Activated B cell treated with CpG ODN at 0.5 μM for 24 hours (primary cell): ENCODE measurements at regions of chr7 and their contacts with region 1.

Region 1: GRCh38 chr7:105429746-105430612 is 41.3 kb upstream of the SRPK2 start:
- DNase-seq: no peak
- ATAC-seq: peak; percentile 54
- H3K4me3 Mint-ChIP-seq: no peak overlapping the region
- H3K27ac Mint-ChIP-seq: no peak overlapping the region
- H3K4me1 Mint-ChIP-seq: peaks cover 3% of the 10 kb centered on the region
- H3K27me3 Mint-ChIP-seq: no peaks in the 10 kb centered on the region
- CTCF ChIP-seq: no peak

Region 2: GRCh38 chr7:105141068-105141467 is 288.9 kb before region 1 on chr7:
- CTCF ChIA-PET with region 1: interaction called, 7 read pairs
- POLR2A ChIA-PET with region 1: no interaction called
- intact Hi-C with region 1: loop called (anchors 1 kb)
- DNase-seq: no peak
- ATAC-seq: no peak
- H3K4me3 Mint-ChIP-seq: no peak overlapping the region
- H3K27ac Mint-ChIP-seq: no peak overlapping the region
- H3K4me1 Mint-ChIP-seq: no peaks in the 10 kb centered on the region
- H3K27me3 Mint-ChIP-seq: no peaks in the 10 kb centered on the region
- CTCF ChIP-seq: no peak

Region 3: DNA sequence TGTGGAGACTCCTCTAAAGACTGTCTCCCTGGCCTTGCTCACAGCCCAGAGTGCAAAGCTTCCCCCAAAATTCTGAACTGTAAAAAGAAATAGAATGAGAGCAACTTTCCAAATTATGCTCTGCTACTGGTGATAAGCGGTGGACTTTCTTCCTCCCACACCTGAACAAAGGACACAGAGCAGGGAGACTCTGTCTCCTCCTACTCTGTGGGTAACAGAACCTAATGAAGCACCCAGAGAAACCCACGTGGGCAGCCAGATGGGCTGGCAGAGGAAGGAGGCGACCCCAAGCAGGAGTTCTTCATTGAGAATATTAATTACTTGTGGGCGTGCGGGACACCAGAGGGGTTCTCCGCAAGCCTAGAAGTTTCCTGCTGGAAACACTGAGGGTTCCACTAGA is 276.4 kb before region 1 on chr7:
- CTCF ChIA-PET with region 1: interaction called, 5 read pairs
- POLR2A ChIA-PET with region 1: no interaction called
- intact Hi-C with region 1: loop called (anchors 1 kb)
- DNase-seq: no peak
- ATAC-seq: no peak
- H3K4me3 Mint-ChIP-seq: no peak overlapping the region
- H3K27ac Mint-ChIP-seq: peak overlapping the region; percentile 1
- H3K4me1 Mint-ChIP-seq: no peaks in the 10 kb centered on the region
- H3K27me3 Mint-ChIP-seq: no peaks in the 10 kb centered on the region
- CTCF ChIP-seq: no peak

Region 4: DNA sequence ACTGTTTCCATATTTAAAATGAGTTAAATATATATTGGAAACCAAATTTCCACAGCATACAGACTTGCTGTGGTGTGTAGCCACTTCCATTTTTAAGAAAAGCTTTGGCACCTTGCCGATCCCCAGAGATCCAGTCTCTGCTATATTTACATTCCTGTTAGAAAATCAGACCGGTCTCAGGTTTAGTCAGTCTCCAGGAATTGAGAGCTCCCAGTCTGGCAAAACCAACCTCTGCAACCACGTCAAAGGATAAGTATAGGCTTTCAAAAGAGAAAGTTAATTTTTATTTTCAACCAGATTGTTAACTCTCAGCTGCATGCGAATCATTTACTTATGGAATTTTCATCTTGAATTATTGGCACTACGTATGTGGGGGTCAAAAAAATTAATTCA is 63.9 kb after region 1 on chr7:
- CTCF ChIA-PET with region 1: no interaction called
- POLR2A ChIA-PET with region 1: no interaction called
- intact Hi-C with region 1: no loop called
- DNase-seq: no peak
- ATAC-seq: no peak
- H3K4me3 Mint-ChIP-seq: no peak overlapping the region
- H3K27ac Mint-ChIP-seq: no peak overlapping the region
- H3K4me1 Mint-ChIP-seq: no peaks in the 10 kb centered on the region
- H3K27me3 Mint-ChIP-seq: no peaks in the 10 kb centered on the region
- CTCF ChIP-seq: no peak